ENCODE measurements at regions of chr9 and their contacts with region 1.

Region 1: GRCh38 chr9:18208154-18209059 is 265.5 kb upstream of the ADAMTSL1 start:
- DNase-seq: peak; percentile 4
- H3K4me3 ChIP-seq: no peak overlapping the region
- H3K27ac ChIP-seq: no peak overlapping the region
- H3K4me1 ChIP-seq: no peaks in the 10 kb centered on the region
- CTCF ChIP-seq: peak; percentile 66

Region 2: GRCh38 chr9:17810728-17811571 is 397.5 kb before region 1 on chr9:
- CTCF ChIA-PET with region 1: no interaction called
- POLR2A ChIA-PET with region 1: no interaction called
- intact Hi-C with region 1: loop called (anchors 1 kb)
- DNase-seq: peak; percentile 68
- H3K4me3 ChIP-seq: no peak overlapping the region
- H3K27ac ChIP-seq: no peak overlapping the region
- H3K4me1 ChIP-seq: no peaks in the 10 kb centered on the region
- CTCF ChIP-seq: peak; percentile 97

Region 3: DNA sequence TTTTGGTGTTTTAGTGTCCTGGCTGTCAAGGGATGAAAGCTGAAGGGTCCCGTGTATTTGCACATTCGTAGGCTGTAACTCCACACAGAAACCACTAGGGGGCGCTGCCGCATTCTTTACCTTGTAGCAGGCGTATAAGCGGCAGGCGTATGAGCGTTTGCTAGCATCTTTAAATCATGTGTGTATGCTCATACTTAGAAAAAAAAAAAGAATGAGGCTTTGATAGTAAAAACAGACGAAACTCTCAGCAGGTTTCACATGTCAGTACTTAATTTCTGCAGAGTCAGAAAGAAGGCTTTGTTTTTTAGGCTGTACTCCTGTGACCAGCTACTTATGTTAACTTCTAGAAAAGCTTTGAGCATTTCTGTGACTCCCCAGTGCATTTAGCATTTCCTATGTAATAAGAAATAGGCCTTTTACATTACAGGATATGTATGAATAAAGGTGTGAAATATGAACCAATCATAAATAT is 46.8 kb after region 1 on chr9:
- CTCF ChIA-PET with region 1: no interaction called
- POLR2A ChIA-PET with region 1: no interaction called
- intact Hi-C with region 1: no loop called
- DNase-seq: peak; percentile 79
- H3K4me3 ChIP-seq: no peak overlapping the region
- H3K27ac ChIP-seq: no peak overlapping the region
- H3K4me1 ChIP-seq: no peaks in the 10 kb centered on the region
- CTCF ChIP-seq: peak; percentile 98

Measured in OCI-LY7 (cell line).